ENCODE measurements at regions of chr18 and their contacts with region 1.

Region 1: DNA sequence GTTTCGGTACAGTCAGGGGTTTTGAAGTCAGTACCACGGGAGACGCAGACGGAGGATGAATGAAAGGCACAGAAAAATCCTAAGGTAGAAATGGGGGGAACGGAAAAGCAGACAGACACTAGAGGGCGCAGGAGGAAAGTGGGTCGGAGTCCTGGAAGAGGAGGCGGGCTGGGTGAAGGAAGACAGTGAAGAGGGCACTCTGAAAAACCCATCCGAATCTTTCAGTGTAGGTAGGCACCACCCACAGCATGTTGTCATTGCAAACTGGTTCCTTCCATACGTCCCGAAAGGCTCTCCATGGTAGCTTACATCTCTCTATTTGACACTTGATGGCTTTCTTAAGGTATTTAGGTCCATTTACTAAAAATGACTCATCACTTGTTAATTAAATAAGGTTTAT is 18.5 kb upstream of the ZNF236 start:
- H3K4me3 ChIP-seq: no peak overlapping the region
- H3K27ac ChIP-seq: no peak overlapping the region
- H3K4me1 ChIP-seq: 0 out of 2 replicates have a peak, but pooled peaks cover 3% of the 10 kb centered on the region
- CTCF ChIP-seq: peak; percentile 90

Region 2: GRCh38 chr18:76791106-76791505 is 12.7 kb before region 1 on chr18:
- CTCF ChIA-PET with region 1: interaction called, 52 read pairs
- POLR2A ChIA-PET with region 1: interaction called, 4 read pairs
- H3K4me3 ChIP-seq: no peak overlapping the region
- H3K27ac ChIP-seq: no peak overlapping the region
- H3K4me1 ChIP-seq: no peaks in the 10 kb centered on the region
- CTCF ChIP-seq: no peak

Region 3: GRCh38 chr18:76827205-76828200 is 23.7 kb after region 1 on chr18:
- CTCF ChIA-PET with region 1: interaction called, 16 read pairs
- POLR2A ChIA-PET with region 1: interaction called, 3 read pairs
- H3K4me3 ChIP-seq: no peak overlapping the region
- H3K27ac ChIP-seq: no peak overlapping the region
- H3K4me1 ChIP-seq: peaks cover 14% of the 10 kb centered on the region
- CTCF ChIP-seq: no peak

Region 4: DNA sequence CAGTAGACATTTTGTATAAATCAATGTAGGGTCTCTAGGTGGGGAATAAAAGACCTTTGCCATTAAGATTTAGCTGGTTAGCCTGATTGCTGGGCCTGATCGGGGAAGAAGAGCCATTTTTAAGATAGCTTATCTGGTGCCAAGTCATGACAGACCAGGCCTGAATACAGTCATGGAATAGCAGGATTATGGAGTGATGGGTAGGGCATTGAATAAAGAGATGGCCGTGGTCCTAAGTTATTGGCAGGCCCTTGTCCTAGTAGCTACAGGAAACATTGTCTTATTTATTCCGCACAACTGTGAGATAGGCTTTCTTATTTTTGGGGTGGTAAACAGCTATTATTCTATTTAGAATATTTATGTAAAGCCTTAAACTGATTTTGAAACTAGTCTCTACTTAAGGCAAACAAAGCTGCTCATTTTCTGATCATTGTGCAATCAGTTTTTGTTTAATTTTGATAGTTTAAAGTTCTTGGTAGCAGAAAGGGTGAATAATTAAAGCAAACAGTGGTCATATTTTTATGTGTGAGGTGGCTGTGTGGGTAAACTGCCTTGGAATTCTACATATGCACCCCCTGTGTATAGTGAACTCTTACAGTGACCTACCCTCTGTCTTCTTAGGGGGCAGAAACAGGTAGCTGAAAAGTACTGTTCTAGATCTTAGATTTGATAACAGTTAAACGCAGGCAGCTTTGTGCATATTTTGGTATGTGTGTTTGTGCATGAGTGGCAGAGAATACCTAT is 41.1 kb after region 1 on chr18:
- CTCF ChIA-PET with region 1: interaction called, 13 read pairs
- POLR2A ChIA-PET with region 1: no interaction called
- H3K4me3 ChIP-seq: no peak overlapping the region
- H3K27ac ChIP-seq: no peak overlapping the region
- H3K4me1 ChIP-seq: peaks cover 14% of the 10 kb centered on the region
- CTCF ChIP-seq: no peak

Region 5: GRCh38 chr18:76982841-76983587 is 179.2 kb after region 1 on chr18:
- CTCF ChIA-PET with region 1: interaction called, 84 read pairs
- POLR2A ChIA-PET with region 1: no interaction called
- H3K4me3 ChIP-seq: no peak overlapping the region
- H3K27ac ChIP-seq: no peak overlapping the region
- H3K4me1 ChIP-seq: no peaks in the 10 kb centered on the region
- CTCF ChIP-seq: peak; percentile 88

Region 6: DNA sequence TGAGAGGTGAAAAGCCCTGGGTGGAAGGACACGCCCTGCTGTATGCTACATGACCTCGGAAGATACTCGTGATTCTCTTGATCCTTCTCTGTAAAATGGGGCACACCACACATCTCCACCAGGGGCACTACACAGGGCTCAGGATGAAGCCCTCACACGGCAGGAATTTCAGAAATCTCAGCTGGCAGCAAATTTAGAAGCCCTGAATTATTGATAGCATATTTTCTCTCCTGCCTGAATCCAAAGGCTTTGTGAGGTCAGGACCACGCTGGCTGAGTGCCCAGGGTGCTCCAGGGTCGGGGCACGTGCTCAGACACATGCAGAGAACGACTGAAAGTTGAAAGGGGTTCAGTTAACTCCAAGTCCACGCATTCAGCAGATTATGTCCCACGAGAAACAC is 403.7 kb after region 1 on chr18:
- CTCF ChIA-PET with region 1: interaction called, 13 read pairs
- POLR2A ChIA-PET with region 1: no interaction called
- H3K4me3 ChIP-seq: no peak overlapping the region
- H3K27ac ChIP-seq: no peak overlapping the region
- H3K4me1 ChIP-seq: no peaks in the 10 kb centered on the region
- CTCF ChIP-seq: peak; percentile 56; the same call in 1 of the 2 replicates

Measured in HEK293 (cell line).